A673 (cell line): ENCODE measurements at regions of chr6 and their contacts with region 1.

Region 1: DNA sequence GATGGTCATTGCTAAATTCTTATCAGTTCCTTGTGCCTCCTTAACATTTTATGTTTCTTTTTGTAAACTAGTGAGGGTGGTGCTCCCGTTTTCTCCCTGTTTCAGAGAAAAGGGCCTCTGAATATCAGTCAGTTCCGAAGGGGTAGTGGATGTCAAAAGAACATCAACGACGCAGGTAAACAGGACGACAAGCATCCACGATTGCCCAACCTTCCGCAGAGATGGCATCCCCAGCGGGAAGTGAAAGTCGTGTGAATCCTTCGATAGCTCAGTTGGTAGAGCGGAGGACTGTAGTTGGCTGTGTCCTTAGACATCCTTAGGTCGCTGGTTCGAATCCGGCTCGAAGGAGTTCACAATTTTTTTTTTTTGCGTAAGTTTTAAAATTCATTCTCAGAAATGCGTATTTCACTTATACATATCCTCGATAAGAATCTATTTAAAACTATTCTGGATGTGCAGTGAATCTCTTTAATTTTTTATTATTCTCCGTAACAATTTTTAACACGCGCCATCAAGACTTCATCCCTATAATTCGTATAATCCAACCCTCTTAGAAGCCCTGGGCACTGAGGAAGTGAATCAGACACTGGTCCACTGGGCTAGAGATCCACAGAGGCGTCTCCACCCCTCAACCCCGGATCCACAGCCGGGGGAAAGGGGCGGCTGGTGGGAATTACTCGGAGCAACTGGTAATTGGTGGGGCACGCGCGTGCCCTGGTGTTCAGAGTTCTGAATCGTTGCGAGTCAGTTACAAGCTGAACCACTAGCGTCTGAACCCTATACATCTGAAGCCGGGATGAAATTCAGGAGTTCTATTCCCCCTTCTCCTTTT is 27.9 kb upstream of the ABT1 start:
- DNase-seq: peak; percentile 93
- H3K4me3 ChIP-seq: peak overlapping the region; percentile 66
- H3K27ac ChIP-seq: peak overlapping the region; percentile 55
- H3K4me1 ChIP-seq: peaks cover 3% of the 10 kb centered on the region
- H3K27me3 ChIP-seq: no peaks in the 10 kb centered on the region
- CTCF ChIP-seq: peak; percentile 47

Region 2: DNA sequence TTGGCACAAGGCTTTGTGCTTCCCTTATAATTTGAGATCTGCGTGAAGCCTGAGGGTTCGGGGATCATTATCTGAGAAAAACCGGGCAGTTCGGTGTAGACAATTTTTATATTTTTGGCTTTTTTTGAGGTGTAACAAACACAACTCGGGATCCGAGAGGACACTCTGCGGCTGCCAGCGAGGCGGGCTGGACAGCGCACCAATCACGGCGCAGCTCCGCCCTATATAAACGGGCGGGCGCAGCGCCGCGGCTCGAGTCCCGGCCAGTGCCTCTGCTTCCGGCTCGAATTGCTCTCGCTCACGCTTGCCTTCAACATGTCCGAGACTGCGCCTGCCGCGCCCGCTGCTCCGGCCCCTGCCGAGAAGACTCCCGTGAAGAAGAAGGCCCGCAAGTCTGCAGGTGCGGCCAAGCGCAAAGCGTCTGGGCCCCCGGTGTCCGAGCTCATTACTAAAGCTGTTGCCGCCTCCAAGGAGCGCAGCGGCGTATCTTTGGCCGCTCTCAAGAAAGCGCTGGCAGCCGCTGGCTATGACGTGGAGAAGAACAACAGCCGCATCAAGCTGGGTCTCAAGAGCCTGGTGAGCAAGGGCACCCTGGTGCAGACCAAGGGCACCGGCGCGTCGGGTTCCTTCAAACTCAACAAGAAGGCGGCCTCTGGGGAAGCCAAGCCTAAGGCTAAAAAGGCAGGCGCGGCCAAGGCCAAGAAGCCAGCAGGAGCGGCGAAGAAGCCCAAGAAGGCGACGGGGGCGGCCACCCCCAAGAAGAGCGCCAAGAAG is 412.6 kb before region 1 on chr6:
- CTCF ChIA-PET with region 1: no interaction called
- POLR2A ChIA-PET with region 1: interaction called, 13 read pairs
- intact Hi-C with region 1: no loop called
- DNase-seq: peak; percentile 91
- H3K4me3 ChIP-seq: peak overlapping the region; percentile 89
- H3K27ac ChIP-seq: peak overlapping the region; percentile 99
- H3K4me1 ChIP-seq: peaks cover 12% of the 10 kb centered on the region
- H3K27me3 ChIP-seq: no peaks in the 10 kb centered on the region
- CTCF ChIP-seq: no peak

Region 3: DNA sequence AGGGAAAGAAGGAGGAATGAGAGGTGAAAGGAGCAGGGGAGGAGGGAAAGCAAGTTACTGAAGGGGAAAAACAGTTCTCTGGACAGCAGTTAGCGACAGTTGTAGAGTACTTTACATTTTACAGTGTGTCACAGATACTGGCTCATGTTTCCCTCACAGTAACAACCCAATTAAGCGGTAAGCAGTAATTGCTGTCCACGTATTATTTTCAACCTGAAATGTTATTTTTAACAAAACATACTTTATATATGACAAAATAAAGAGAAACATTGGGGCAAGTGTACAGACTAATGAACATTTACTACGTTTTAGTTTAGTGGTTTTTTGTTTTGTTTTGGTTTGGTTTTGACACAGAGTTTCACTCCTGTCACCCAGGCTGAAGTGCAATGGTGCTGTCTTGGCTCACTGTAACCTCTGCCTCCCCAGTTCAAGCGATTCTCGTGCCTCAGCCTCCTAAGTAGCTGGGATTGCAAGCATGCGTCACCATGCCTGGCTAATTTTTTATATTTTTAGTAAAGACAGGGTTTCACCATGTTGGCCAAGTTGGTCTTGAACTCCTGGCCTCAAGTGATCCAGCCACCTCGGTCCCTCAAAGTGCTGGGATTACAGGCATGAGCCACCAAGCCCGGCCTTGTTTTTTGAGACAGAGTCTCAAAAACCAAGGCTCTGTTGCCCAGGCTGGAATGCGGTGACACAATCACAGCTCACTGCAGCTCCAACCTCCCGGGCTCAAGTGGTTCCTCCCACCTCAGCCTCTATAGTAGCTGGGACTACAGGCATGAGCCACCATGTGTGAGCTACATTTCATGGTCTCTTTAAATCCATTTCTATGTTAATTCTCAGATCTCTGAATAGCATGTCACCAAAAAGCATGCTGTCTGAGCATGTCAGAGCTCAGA is 226.5 kb before region 1 on chr6:
- CTCF ChIA-PET with region 1: interaction called, 22 read pairs
- POLR2A ChIA-PET with region 1: no interaction called
- intact Hi-C with region 1: loop called (anchors 1 kb)
- DNase-seq: no peak
- H3K4me3 ChIP-seq: peak overlapping the region; percentile 34
- H3K27ac ChIP-seq: no peak overlapping the region
- H3K4me1 ChIP-seq: peaks cover 4% of the 10 kb centered on the region
- H3K27me3 ChIP-seq: no peaks in the 10 kb centered on the region
- CTCF ChIP-seq: no peak

Region 4: GRCh38 chr6:26520853-26521599 is 47.8 kb before region 1 on chr6:
- CTCF ChIA-PET with region 1: no interaction called
- POLR2A ChIA-PET with region 1: no interaction called
- intact Hi-C with region 1: loop called (anchors 2 kb)
- DNase-seq: peak; percentile 88
- H3K4me3 ChIP-seq: peak overlapping the region; percentile 61
- H3K27ac ChIP-seq: peak overlapping the region; percentile 96
- H3K4me1 ChIP-seq: peaks cover 7% of the 10 kb centered on the region
- H3K27me3 ChIP-seq: no peaks in the 10 kb centered on the region
- CTCF ChIP-seq: no peak

Region 5: DNA sequence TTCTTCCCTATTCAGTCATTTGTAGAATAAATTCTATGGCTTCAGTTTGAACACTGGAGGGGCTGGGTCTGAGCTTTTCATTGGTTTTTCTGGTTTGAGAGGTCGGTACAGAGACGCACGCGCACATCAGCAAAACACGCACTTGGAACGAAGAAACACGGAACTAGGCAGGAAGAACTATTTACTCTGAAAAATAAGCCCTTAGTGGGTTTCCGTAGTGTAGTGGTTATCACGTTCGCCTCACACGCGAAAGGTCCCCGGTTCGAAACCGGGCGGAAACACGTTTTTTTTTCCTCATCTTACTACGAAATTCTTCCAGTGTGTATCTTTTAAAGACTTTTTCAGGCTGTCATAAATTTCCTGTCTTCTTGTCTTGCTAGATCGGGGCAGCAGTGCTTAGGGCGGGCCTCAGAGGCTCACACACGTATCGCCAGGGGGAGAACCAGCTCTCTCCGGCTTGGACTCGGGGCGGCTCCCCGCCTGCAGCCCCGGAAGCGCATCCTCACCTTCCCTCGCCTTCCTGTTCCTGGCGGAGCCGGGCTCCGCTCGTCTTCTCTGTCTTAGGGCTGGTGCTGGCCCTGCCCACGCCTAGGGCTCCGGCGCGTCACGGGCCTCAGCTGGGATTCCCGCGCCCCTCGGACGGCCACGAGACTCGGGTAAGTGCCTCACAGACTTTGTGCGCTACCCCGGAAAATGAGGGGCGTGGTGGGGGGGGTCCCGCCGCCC is 30.8 kb before region 1 on chr6 and contains the start of gene HMGN4:
- CTCF ChIA-PET with region 1: interaction called, 9 read pairs
- POLR2A ChIA-PET with region 1: no interaction called
- intact Hi-C with region 1: loop called (anchors 1 kb)
- DNase-seq: peak; percentile 94
- H3K4me3 ChIP-seq: peak within 1 kb of the TSS; percentile 83
- H3K27ac ChIP-seq: peak within 1 kb of the TSS; percentile 86
- H3K4me1 ChIP-seq: peaks cover 32% of the 10 kb centered on the region
- H3K27me3 ChIP-seq: no peaks in the 10 kb centered on the region
- CTCF ChIP-seq: peak; percentile 22; the same call in 1 of the 2 replicates
- total RNA-seq, gene HMGN4: 55.9 and 58.6 TPM in 2 replicates

Region 6: DNA sequence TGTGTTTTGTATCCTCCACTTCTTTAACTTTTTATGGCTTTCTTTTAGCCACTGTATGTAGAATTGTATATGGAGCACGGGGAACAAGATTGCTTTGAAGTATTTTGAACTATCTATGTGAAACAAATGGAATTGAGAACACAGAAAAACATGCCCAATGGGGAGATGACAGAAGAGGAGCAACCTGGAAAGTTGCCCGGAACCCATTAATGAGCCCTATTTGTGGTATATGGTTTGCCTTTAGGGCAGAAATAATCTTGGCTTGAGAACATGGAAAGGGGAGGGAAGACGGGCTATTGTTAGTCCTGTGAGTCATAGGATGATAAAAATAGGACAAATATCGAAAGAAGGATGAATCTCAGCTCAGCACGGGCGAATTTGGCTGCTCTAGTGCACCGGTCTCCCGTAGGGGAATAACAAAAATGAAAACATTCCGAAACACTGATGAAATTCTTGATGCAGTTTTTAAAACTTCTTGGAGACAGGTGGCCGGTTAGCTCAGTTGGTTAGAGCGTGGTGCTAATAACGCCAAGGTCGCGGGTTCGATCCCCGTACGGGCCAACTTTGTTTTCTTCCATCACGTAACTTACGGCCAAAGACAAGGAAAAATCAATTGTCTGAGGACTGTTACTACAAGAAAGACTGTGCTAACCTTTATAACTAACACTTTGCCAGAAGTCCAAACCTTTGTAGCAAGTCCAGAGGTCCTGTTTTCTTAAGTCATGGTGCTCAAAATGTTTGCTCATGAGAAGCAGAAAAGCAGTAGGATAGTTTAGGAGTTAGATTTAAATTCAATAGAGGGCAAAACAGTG is 15.0 kb before region 1 on chr6:
- CTCF ChIA-PET with region 1: interaction called, 7 read pairs
- POLR2A ChIA-PET with region 1: no interaction called
- intact Hi-C with region 1: loop called (anchors 2 kb)
- DNase-seq: peak; percentile 89
- H3K4me3 ChIP-seq: peak overlapping the region; percentile 61
- H3K27ac ChIP-seq: peak overlapping the region; percentile 69
- H3K4me1 ChIP-seq: no peaks in the 10 kb centered on the region
- H3K27me3 ChIP-seq: no peaks in the 10 kb centered on the region
- CTCF ChIP-seq: no peak

Region 7: GRCh38 chr6:26596579-26597388 is 28.0 kb after region 1 on chr6 and contains the start of gene ABT1:
- CTCF ChIA-PET with region 1: interaction called, 33 read pairs
- POLR2A ChIA-PET with region 1: interaction called, 3 read pairs
- intact Hi-C with region 1: loop called (anchors 1 kb)
- DNase-seq: peak; percentile 99
- H3K4me3 ChIP-seq: peak within 1 kb of the TSS; percentile 90
- H3K27ac ChIP-seq: peak within 1 kb of the TSS; percentile 82
- H3K4me1 ChIP-seq: peaks cover 7% of the 10 kb centered on the region
- H3K27me3 ChIP-seq: no peaks in the 10 kb centered on the region
- CTCF ChIP-seq: no peak
- total RNA-seq, gene ABT1: 17.4 and 18.1 TPM in 2 replicates

Region 8: GRCh38 chr6:27260369-27260768 is 691.6 kb after region 1 on chr6:
- CTCF ChIA-PET with region 1: no interaction called
- POLR2A ChIA-PET with region 1: no interaction called
- intact Hi-C with region 1: no loop called
- DNase-seq: no peak
- H3K4me3 ChIP-seq: no peak overlapping the region
- H3K27ac ChIP-seq: no peak overlapping the region
- H3K4me1 ChIP-seq: no peaks in the 10 kb centered on the region
- H3K27me3 ChIP-seq: no peaks in the 10 kb centered on the region
- CTCF ChIP-seq: no peak